Endothelial cell of umbilical vein (primary cell): ENCODE measurements at regions of chr12 and their contacts with region 1.

Region 1: GRCh38 chr12:34204830-34205285 is 182.6 kb downstream of the ALG10 start:
- DNase-seq: no peak
- H3K4me3 ChIP-seq: no peak overlapping the region
- H3K27ac ChIP-seq: no peak overlapping the region
- H3K4me1 ChIP-seq: no peaks in the 10 kb centered on the region
- H3K27me3 ChIP-seq: no peaks in the 10 kb centered on the region
- CTCF ChIP-seq: no peak
- POLR2A ChIP-seq: no peak

Region 2: GRCh38 chr12:34218165-34219045 is 13.5 kb after region 1 on chr12:
- CTCF ChIA-PET with region 1: no interaction called
- POLR2A ChIA-PET with region 1: no interaction called
- dilution Hi-C with region 1: no loop called
- intact Hi-C with region 1: no loop called
- DNase-seq: peak; percentile 55
- H3K4me3 ChIP-seq: peak overlapping the region in 1 of 3 experiments; percentile 2
- H3K27ac ChIP-seq: no peak overlapping the region
- H3K4me1 ChIP-seq: no peaks in the 10 kb centered on the region
- H3K27me3 ChIP-seq: no peaks in the 10 kb centered on the region
- CTCF ChIP-seq: peak; percentile 71 to 81
- POLR2A ChIP-seq: no peak

Region 3: GRCh38 chr12:34233618-34234017 is 28.8 kb after region 1 on chr12:
- CTCF ChIA-PET with region 1: no interaction called
- POLR2A ChIA-PET with region 1: no interaction called
- dilution Hi-C with region 1: no loop called
- intact Hi-C with region 1: no loop called
- DNase-seq: no peak
- H3K4me3 ChIP-seq: no peak overlapping the region
- H3K27ac ChIP-seq: no peak overlapping the region
- H3K4me1 ChIP-seq: no peaks in the 10 kb centered on the region
- H3K27me3 ChIP-seq: no peaks in the 10 kb centered on the region
- CTCF ChIP-seq: no peak
- POLR2A ChIP-seq: no peak

Region 4: DNA sequence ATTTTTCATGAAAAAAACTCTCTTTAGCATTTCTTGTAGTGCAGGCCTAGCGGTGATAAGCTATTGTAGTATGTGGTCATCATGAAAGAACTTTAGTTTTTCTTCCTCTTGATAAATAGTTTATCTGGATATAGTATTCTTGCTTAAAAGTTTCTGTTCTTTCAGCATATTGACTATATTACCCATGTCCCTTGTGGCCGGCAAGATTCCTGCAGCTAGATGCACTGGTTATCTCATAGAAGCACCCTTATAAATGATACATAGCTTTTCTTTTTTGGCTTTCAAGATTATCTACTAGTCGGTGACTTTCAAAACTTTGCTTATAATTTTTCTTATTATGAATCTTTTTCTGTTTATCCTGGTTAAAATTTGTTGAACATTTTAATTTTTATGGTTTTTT is 52.2 kb after region 1 on chr12:
- CTCF ChIA-PET with region 1: no interaction called
- POLR2A ChIA-PET with region 1: no interaction called
- dilution Hi-C with region 1: no loop called
- intact Hi-C with region 1: loop called (anchors 10 kb)
- DNase-seq: no peak
- H3K4me3 ChIP-seq: no peak overlapping the region
- H3K27ac ChIP-seq: no peak overlapping the region
- H3K4me1 ChIP-seq: no peaks in the 10 kb centered on the region
- H3K27me3 ChIP-seq: no peaks in the 10 kb centered on the region
- CTCF ChIP-seq: no peak
- POLR2A ChIP-seq: no peak